HepG2 (cell line): ENCODE measurements at regions of chr11 and their contacts with region 1.

Region 1: DNA sequence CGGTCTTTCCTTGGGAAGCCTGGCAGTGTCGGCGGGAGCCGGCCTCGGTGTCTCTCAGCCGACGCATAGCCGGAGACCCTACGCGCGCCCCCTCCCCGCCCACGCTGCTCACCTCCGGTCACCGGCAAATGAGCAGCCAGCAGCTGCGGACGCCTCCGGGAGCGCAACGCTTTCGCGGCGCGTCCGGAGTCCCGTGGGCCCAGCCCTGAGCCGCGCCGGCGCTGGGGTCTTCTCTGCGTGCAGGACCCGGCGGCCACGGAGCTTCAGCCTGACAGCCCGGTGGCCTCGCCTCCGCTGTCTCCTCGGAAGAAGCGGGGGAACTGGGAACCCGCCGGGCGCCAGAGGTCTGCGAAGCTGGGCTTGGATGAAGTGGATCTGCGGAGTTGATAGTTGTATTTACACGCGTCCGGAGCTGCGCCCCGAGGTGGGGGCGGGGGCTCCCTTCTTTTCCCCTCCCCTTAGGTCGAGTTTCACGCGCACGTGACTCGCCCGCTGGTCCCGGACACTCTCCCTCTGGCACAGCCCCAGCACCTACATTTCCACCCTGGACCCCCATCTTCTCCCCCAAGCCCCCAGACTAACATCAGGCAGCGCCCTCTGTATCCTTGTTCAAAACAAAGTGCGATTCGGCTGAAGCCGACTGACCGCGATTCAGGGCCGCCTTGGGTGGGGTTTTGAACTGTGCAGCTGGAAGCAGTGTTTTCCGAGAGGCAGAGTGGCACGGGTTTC is at the start of gene SLC43A1:
- DNase-seq: peak; percentile 46
- ATAC-seq: peak; percentile 73
- H3K4me3 ChIP-seq: peak within 1 kb of the TSS; percentile 76 to 95 (median 86)
- H3K27ac ChIP-seq: peak within 1 kb of the TSS; percentile 82
- H3K4me1 ChIP-seq: peaks cover 61% of the 10 kb centered on the region
- H3K27me3 ChIP-seq: no peaks in the 10 kb centered on the region
- CTCF ChIP-seq: peak; percentile 32
- EP300 ChIP-seq: no peak
- POLR2A ChIP-seq: peak in 1 of 2 experiments; percentile 75; a peak in 3 of 4 replicates
- RAD21 ChIP-seq: no peak
- total RNA-seq, gene SLC43A1: 40.0 and 72.3 TPM in 2 replicates

Region 2: GRCh38 chr11:57493507-57494503 is 21.7 kb before region 1 on chr11:
- CTCF ChIA-PET with region 1: no interaction called
- POLR2A ChIA-PET with region 1: interaction called, 111 read pairs
- in situ Hi-C with region 1: no loop called
- intact Hi-C with region 1: loop called (anchors 1 kb)
- DNase-seq: peak; percentile 73
- ATAC-seq: peak; percentile 45
- H3K4me3 ChIP-seq: no peak overlapping the region
- H3K27ac ChIP-seq: peak overlapping the region; percentile 76
- H3K4me1 ChIP-seq: peaks cover 54% of the 10 kb centered on the region
- H3K27me3 ChIP-seq: no peaks in the 10 kb centered on the region
- CTCF ChIP-seq: peak; percentile 97
- EP300 ChIP-seq: peak in 1 of 2 experiments; percentile 72; a peak in 2 of 4 replicates
- POLR2A ChIP-seq: no peak
- RAD21 ChIP-seq: peak; percentile 96

Region 3: GRCh38 chr11:57499413-57499982 is 16.0 kb before region 1 on chr11:
- CTCF ChIA-PET with region 1: interaction called, 4 read pairs
- POLR2A ChIA-PET with region 1: interaction called, 111 read pairs
- in situ Hi-C with region 1: no loop called
- intact Hi-C with region 1: loop called (anchors 1 kb)
- DNase-seq: peak; percentile 84
- ATAC-seq: peak; percentile 77
- H3K4me3 ChIP-seq: peak overlapping the region in 1 of 3 experiments; percentile 5; a peak in 1 of 6 replicates
- H3K27ac ChIP-seq: peak overlapping the region; percentile 97
- H3K4me1 ChIP-seq: peaks cover 94% of the 10 kb centered on the region
- H3K27me3 ChIP-seq: no peaks in the 10 kb centered on the region
- CTCF ChIP-seq: no peak
- EP300 ChIP-seq: 0 out of 4 replicates have a peak, but pooled peaks of 1 of the 2 experiments have one; percentile 2
- POLR2A ChIP-seq: peak; percentile 41 to 63; a peak in 3 of 4 replicates
- RAD21 ChIP-seq: peak; percentile 24; the same call in 1 of the 2 replicates

Region 4: DNA sequence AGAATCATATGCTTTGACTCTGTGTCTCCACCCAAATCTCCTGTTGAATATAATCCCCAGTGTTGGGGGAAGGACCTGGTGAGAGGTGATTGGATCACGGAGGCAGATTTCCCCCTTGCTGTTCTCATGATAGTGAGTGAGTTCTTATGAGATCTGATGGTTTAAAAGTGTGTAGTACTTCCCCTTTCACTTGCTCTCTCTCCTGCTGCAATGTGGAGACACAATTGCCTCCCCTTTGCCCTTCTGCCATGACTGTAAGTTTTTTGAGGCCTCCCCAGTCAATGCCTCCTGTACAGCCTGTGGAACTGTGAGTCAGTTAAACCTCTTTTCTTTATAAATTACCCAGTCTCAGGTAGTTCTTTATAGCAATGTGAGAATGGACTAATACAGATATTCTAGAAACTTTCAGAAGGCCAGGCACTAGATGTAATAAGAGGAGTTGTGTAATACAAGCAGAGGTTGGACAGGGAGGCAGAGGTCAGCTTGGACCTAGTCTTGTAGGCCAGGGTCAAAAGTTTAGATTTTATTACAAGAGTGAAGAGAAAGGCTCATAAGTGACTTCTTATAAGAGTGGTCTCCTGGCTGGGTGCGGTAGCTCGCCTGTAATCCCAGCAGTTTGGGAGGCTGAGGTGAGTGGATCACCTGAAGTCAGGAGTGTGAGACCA is 72.7 kb after region 1 on chr11:
- CTCF ChIA-PET with region 1: no interaction called
- POLR2A ChIA-PET with region 1: no interaction called
- in situ Hi-C with region 1: no loop called
- intact Hi-C with region 1: no loop called
- DNase-seq: no peak
- ATAC-seq: no peak
- H3K4me3 ChIP-seq: no peak overlapping the region
- H3K27ac ChIP-seq: no peak overlapping the region
- H3K4me1 ChIP-seq: peaks cover 42% of the 10 kb centered on the region
- H3K27me3 ChIP-seq: peaks cover 0 to 3% of the 10 kb centered on the region in 2 experiments; a peak in 1 of 5 replicates
- CTCF ChIP-seq: no peak
- EP300 ChIP-seq: no peak
- POLR2A ChIP-seq: no peak
- RAD21 ChIP-seq: no peak